Activated CD8-positive, alpha-beta T cell treated with anti-CD3 and anti-CD28 coated beads for 36 hours (primary cell): ENCODE measurements at regions of chr19 and their contacts with region 1.

Region 1: DNA sequence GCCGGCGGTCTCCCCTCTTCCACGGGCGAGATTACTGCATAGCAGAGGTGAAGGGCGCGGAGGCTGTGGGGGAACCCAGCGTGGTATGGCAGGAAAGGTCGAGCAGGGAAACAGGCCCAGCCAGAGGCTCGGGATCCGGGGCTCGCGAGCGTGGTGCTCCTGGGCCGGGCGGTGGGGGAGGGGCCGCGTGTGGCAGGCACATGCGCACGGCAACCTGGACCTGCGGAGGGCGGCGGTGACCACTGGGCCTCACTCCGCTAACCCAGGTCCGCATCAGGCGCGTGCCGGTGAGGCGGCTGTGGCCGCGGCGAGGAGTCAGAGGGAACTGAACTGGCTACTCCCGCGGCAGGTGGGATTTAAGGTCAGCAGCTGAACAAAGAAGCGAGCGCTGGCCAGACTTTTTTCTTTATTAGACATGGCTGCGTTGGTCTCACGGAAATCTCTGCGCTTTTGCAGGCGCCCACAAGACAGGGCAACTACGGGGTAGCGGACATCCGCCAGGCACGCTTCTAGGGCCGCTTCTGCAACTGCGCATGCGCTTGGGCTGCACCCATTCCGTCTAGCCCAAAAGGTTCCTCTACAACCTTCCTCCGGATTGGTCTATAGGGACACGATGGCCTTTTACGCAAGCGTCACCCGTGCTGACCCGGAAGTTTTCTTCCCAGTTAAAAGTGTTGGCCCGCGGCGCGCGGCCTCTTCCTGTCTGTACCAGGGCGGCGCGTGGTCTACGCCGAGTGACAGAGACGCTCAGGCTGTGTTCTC is at the start of gene RPS5:
- DNase-seq: peak; percentile 97
- ATAC-seq: peak; percentile 91
- H3K4me3 Mint-ChIP-seq: peak within 1 kb of the TSS; percentile 97
- H3K27ac Mint-ChIP-seq: peak within 1 kb of the TSS; percentile 98
- H3K4me1 Mint-ChIP-seq: peaks cover 35% of the 10 kb centered on the region
- H3K27me3 Mint-ChIP-seq: no peaks in the 10 kb centered on the region
- CTCF ChIP-seq: no peak
- total RNA-seq, gene RPS5: 1,906 to 1,936 TPM

Region 2: DNA sequence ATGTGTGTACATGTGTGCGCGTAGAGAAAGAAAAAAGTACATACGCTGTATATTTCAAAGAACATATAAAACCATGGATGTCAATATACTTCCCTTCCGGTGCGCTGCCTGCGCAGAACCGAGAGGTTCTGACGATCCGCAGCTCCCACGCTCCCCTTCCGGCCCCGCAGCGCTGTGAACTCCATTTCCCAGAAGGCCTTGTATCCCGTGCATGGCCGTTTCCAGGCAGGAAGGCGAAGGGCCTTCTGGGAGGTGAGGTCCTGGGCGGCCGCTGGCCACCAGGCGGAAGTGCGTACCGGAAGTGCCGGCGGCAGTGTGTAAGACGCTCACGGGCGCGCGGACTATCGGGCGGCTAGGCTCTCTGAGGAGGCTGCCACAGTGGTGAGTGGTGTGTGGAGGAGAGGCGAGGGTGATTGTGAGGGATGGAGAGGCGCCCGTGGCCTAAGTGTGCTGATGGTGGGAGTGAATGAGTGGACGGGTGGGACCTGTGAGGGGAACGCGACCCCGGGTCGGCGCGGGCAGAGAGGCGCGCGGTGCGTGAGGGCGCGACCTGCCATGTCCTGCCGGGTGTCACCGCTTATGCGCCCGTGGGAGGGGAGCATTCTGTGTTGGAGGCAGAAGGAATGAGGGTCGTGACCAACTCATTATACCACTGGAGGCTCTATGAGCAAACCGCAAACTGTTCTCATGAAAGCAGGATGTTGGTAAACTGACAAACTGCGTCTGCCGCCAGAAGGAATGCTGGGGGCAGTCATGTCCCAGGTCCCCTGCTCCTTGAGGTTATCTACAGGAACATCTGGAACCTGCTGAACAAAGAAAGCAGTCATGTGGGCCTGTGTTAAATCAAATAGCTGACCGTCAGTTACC is 81.5 kb before region 1 on chr19 and contains the start of gene ERVK3-1:
- CTCF ChIA-PET with region 1: no interaction called
- POLR2A ChIA-PET with region 1: no interaction called
- intact Hi-C with region 1: loop called (anchors 5 kb)
- DNase-seq: peak; percentile 97
- ATAC-seq: peak; percentile 98
- H3K4me3 Mint-ChIP-seq: peak within 1 kb of the TSS; percentile 84
- H3K27ac Mint-ChIP-seq: peak within 1 kb of the TSS; percentile 95
- H3K4me1 Mint-ChIP-seq: peaks cover 40% of the 10 kb centered on the region
- H3K27me3 Mint-ChIP-seq: no peaks in the 10 kb centered on the region
- CTCF ChIP-seq: no peak
- total RNA-seq, gene ERVK3-1: 40.6 to 43.0 TPM

Region 3: GRCh38 chr19:58400916-58401839 is 14.4 kb after region 1 on chr19:
- CTCF ChIA-PET with region 1: no interaction called
- POLR2A ChIA-PET with region 1: interaction called, 45 read pairs
- intact Hi-C with region 1: no loop called
- DNase-seq: peak; percentile 100
- ATAC-seq: peak; percentile 99
- H3K4me3 Mint-ChIP-seq: peak overlapping the region; percentile 87
- H3K27ac Mint-ChIP-seq: peak overlapping the region; percentile 86
- H3K4me1 Mint-ChIP-seq: peaks cover 18% of the 10 kb centered on the region
- H3K27me3 Mint-ChIP-seq: no peaks in the 10 kb centered on the region
- CTCF ChIP-seq: no peak

Region 4: DNA sequence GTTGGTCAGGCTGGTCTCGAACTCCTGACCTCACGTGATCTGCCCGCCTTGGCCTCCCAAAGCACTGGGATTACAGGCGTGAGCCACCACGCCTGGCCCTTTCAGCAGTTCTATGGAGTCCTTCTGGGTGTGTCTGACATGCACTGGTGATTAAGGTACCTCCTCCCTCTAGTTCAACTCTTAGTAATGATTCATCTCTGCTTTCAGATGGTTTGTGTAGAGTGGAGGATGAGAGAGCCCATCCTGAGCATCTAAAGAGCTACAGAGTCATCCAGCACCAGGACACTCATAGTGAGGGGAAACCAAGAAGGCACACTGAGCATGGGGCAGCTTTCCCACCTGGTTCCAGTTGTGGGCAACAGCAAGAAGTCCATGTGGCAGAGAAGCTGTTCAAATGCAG is 29.8 kb after region 1 on chr19:
- CTCF ChIA-PET with region 1: no interaction called
- POLR2A ChIA-PET with region 1: no interaction called
- intact Hi-C with region 1: no loop called
- DNase-seq: no peak
- ATAC-seq: no peak
- H3K4me3 Mint-ChIP-seq: no peak overlapping the region
- H3K27ac Mint-ChIP-seq: no peak overlapping the region
- H3K4me1 Mint-ChIP-seq: peaks cover 4% of the 10 kb centered on the region
- H3K27me3 Mint-ChIP-seq: no peaks in the 10 kb centered on the region
- CTCF ChIP-seq: no peak